Dendritic cell treated with granulocyte-macrophage colony-stimulating factor and Interleukin-4, amounts not matched to agents 40 ng/mL and 50 ng/mL, for 4 days (primary cell): ENCODE measurements at regions of chr6 and their contacts with region 1.

Region 1: DNA sequence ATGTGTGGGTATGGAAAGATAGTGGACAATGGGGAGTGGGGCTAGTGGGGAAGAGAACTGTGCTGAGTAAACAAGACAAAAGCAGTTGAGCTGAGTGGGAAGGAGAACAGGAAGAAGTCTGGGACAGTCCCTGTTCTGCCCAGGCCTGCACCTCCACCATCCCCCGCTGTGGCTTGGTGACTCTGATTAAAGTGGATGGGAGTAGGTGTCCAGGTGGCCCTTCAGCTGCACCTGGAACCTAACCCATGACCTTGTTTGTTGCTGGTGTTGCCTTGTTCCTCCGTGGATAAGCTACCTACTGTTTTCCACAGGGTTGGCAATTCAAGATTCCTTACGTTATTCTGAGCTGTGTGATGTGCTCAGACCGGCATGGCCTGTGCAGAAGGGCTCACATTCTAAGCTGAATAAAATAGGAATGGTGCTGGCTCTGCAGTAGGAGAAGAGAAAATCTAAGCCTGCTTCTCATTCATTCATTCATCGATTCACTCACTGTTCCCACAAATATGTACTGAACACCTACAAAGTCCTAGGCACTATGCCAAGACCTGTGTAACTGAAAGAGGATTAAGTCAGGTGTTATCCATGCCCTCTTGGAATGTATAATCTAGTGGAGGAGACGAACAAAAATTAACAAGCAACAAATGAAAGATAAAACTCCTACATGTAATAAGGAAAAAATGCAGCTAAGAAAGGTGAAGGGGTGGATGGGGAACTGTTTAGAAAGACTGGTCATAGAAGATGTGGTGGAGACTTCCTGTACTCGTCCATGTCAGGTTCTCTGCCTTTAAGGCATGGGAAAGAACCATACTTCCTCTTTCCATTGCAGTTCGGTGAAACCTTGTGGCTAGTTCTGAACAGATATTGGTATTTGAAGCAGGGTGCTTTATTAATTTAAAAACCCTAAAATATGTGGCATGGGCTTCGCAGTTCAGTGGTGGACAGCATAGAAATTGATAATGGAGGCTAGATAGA is 10.1 kb upstream of the CALHM6 start:
- H3K4me3 Mint-ChIP-seq: no peak overlapping the region
- H3K27ac Mint-ChIP-seq: peak overlapping the region; percentile 76
- H3K4me1 Mint-ChIP-seq: peaks cover 64% of the 10 kb centered on the region
- H3K27me3 Mint-ChIP-seq: peaks cover 2% of the 10 kb centered on the region

Region 2: GRCh38 chr6:116465246-116465645 is 14.2 kb after region 1 on chr6:
- intact Hi-C with region 1: loop called (anchors 2 kb)
- H3K4me3 Mint-ChIP-seq: no peak overlapping the region
- H3K27ac Mint-ChIP-seq: peak overlapping the region; percentile 82
- H3K4me1 Mint-ChIP-seq: peaks cover 58% of the 10 kb centered on the region
- H3K27me3 Mint-ChIP-seq: no peaks in the 10 kb centered on the region

Region 3: DNA sequence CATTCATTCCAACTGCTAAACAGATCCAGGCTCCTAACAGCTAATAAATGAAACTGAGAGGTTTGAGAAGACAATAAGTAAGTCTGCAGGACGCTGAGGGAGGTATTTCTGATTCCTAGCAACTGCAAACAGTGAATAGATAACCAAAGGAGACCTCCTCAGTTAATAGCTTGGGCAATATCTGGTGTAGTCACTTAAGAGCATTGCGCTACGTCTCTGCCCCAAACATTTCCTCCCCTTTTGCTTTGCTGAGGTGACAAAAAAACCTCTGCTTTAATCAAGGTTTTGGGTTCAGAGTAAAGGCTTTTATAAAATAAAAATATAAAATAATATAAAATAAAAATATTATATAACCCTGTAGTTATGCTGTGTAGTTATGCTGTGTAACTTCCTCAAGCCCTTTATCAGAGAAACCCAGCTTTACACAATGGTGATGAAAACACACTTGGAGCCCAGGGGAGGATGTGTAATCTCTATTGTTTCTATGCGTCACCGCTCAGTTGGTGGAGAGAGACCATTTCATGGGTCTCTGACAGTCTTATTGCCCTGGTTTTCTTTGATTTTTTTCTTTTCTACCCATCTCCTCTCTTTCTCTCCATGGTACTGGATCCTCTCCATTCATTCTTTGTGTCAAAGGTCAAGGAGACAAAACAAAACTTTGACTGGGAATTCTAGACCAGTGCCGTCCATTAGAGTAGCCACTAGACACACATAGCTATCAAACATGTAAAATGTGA is 41.4 kb after region 1 on chr6:
- intact Hi-C with region 1: no loop called
- H3K4me3 Mint-ChIP-seq: no peak overlapping the region
- H3K27ac Mint-ChIP-seq: no peak overlapping the region
- H3K4me1 Mint-ChIP-seq: no peaks in the 10 kb centered on the region
- H3K27me3 Mint-ChIP-seq: no peaks in the 10 kb centered on the region